ENCODE measurements at regions of chr14 and their contacts with region 1.

Region 1: GRCh38 chr14:68655911-68656360 is 136.9 kb downstream of the ZFP36L1 start:
- DNase-seq: no peak
- ATAC-seq: peak in 1 of 2 donors; percentile 32
- H3K4me3 ChIP-seq: no peak overlapping the region
- H3K27ac ChIP-seq: no peak overlapping the region
- H3K4me1 ChIP-seq: peaks cover 23 to 32% of the 10 kb centered on the region in 2 donors
- H3K27me3 ChIP-seq: no peaks in the 10 kb centered on the region
- CTCF ChIP-seq: peak; percentile 10 to 50 (median 39)
- POLR2A ChIP-seq: no peak

Region 2: DNA sequence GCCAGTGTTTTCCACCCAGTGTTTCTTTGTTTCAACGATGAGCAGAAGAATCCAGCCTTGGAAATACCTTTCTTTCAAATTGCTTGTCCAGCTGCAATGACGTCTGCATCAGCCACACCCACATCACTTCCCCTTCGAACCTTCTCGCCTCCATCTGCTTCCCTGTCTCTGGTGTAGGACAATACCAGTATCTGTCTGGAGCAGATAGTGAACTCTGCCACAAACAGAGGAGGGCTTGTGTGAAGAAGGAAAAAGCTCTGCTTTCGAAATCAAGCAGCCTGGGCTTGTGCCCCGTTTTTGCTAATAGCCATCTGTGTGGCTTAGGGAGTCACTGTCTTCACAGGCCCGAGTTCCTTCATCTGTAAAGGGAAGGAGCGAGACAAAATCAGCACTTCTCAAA is 278.5 kb before region 1 on chr14:
- in situ Hi-C with region 1: no loop called
- intact Hi-C with region 1: loop called (anchors 1 kb)
- DNase-seq: peak in 1 of 2 donors; percentile 48
- ATAC-seq: peak; percentile 32 to 42
- H3K4me3 ChIP-seq: no peak overlapping the region
- H3K27ac ChIP-seq: peak overlapping the region; percentile 25 to 61 (median 51)
- H3K4me1 ChIP-seq: peaks cover 20 to 29% of the 10 kb centered on the region in 2 donors
- H3K27me3 ChIP-seq: no peaks in the 10 kb centered on the region
- CTCF ChIP-seq: no peak
- POLR2A ChIP-seq: peak in 1 of 2 donors; percentile 13

Region 3: GRCh38 chr14:68495101-68496039 is 160.6 kb before region 1 on chr14:
- in situ Hi-C with region 1: no loop called
- intact Hi-C with region 1: no loop called
- DNase-seq: no peak
- ATAC-seq: peak in 1 of 2 donors; percentile 36
- H3K4me3 ChIP-seq: no peak overlapping the region
- H3K27ac ChIP-seq: no peak overlapping the region
- H3K4me1 ChIP-seq: no peaks in the 10 kb centered on the region
- H3K27me3 ChIP-seq: no peaks in the 10 kb centered on the region
- CTCF ChIP-seq: no peak
- POLR2A ChIP-seq: no peak